ENCODE measurements at regions of chr9 and their contacts with region 1.

Region 1: DNA sequence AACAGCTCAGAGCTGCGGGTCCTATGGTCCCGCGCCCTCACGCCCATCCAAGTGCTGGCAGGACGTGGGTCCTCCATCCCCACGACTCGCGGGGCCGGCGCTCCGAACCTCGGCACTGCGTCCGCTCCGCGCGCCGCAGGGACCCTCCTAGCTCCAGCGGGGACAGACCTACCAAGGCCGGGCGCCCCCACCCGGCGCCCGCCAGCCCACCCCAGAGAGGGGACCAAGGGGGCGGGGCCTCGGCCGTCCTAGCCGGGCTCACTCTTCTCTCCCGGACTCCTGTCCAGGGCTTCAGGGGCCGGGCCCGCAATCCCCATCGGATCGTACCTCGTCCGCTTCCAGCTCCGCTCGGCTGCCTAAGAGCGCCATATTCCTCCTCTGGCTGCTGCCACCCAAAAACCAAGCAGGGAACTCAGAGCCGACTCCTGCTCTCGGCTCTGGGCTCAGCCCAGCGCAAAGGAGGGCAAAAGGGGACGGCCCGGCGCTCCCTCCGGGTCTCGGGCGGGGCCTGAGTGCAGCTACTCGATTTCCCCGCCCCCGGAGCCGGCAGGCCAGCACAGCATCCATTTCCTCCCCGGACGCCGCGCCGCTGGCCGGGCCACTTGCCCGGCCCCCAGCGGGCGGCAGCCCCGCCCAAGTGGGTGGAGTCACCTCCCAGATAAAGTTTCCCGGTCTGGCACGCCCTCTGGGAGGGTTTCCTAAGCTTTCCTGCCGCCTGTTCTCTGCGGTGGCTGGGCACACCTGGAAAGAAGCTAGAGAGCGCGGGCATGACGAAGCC is at the start of gene TTC39B:
- DNase-seq: peak; percentile 85
- H3K4me3 Mint-ChIP-seq: peak within 1 kb of the TSS; percentile 92
- H3K27ac Mint-ChIP-seq: peak within 1 kb of the TSS; percentile 86
- H3K4me1 Mint-ChIP-seq: peaks cover 59% of the 10 kb centered on the region
- H3K27me3 Mint-ChIP-seq: no peaks in the 10 kb centered on the region
- total RNA-seq, gene TTC39B: 27.5 to 29.6 TPM

Region 2: DNA sequence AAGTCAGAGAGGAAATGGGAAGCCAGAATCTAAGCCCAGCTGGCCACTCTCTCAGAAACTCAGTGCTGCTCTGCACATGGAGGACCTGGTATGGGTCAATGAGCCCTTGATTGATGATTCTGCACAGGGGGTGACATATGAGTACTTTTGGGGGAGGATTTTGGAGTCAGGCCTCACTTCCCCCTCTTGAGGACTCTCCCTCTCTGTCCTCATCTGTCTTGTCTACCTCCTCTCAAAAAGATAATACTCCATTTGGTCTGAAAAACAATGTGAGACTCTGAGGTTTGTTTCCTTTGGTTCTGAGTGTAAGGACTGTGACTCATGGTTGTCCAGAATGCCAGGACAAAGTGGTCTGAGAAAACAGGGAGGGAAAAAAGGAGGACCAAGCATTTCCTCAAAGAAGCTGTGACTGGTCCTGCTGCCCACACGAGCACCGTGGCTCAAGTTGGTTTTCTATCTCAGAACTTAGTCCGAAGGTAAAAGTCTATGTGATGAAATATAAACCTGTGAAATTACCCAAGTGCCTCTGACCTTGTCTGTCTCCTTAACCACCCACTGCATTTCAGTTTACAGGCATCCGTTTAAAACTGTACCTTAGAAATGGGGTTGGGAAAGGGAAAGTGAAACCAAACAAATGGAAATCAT is 11.1 kb before region 1 on chr9:
- CTCF ChIA-PET with region 1: interaction called, 21 read pairs
- POLR2A ChIA-PET with region 1: interaction called, 36 read pairs
- DNase-seq: no peak
- H3K4me3 Mint-ChIP-seq: peak overlapping the region; percentile 73
- H3K27ac Mint-ChIP-seq: peak overlapping the region; percentile 98
- H3K4me1 Mint-ChIP-seq: peaks cover 72% of the 10 kb centered on the region
- H3K27me3 Mint-ChIP-seq: no peaks in the 10 kb centered on the region

Region 3: DNA sequence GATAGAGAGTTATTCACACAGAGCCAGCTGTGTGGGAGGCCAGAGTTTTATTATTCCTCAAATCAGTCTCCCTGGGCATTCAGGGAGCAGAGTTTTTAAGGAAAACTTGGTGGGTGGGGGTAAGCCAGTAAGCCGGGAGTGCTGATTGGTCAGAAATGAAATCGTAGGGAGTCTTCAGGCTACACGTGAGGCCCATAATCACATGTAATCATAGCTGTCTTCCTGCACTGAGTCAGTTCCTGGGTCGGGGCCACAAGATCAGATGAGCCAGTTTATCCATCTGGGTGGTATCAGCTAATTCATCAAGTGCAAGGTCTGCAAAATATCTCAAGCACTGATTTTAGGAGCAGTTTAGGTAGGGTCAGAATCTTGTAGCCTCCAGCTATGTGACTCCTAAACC is 10.9 kb after region 1 on chr9:
- CTCF ChIA-PET with region 1: interaction called, 3 read pairs
- POLR2A ChIA-PET with region 1: interaction called, 15 read pairs
- DNase-seq: no peak
- H3K4me3 Mint-ChIP-seq: no peak overlapping the region
- H3K27ac Mint-ChIP-seq: no peak overlapping the region
- H3K4me1 Mint-ChIP-seq: peaks cover 10% of the 10 kb centered on the region
- H3K27me3 Mint-ChIP-seq: no peaks in the 10 kb centered on the region

Region 4: GRCh38 chr9:15404171-15404570 is 97.2 kb after region 1 on chr9:
- CTCF ChIA-PET with region 1: no interaction called
- POLR2A ChIA-PET with region 1: no interaction called
- DNase-seq: no peak
- H3K4me3 Mint-ChIP-seq: no peak overlapping the region
- H3K27ac Mint-ChIP-seq: no peak overlapping the region
- H3K4me1 Mint-ChIP-seq: no peaks in the 10 kb centered on the region
- H3K27me3 Mint-ChIP-seq: no peaks in the 10 kb centered on the region

Region 5: DNA sequence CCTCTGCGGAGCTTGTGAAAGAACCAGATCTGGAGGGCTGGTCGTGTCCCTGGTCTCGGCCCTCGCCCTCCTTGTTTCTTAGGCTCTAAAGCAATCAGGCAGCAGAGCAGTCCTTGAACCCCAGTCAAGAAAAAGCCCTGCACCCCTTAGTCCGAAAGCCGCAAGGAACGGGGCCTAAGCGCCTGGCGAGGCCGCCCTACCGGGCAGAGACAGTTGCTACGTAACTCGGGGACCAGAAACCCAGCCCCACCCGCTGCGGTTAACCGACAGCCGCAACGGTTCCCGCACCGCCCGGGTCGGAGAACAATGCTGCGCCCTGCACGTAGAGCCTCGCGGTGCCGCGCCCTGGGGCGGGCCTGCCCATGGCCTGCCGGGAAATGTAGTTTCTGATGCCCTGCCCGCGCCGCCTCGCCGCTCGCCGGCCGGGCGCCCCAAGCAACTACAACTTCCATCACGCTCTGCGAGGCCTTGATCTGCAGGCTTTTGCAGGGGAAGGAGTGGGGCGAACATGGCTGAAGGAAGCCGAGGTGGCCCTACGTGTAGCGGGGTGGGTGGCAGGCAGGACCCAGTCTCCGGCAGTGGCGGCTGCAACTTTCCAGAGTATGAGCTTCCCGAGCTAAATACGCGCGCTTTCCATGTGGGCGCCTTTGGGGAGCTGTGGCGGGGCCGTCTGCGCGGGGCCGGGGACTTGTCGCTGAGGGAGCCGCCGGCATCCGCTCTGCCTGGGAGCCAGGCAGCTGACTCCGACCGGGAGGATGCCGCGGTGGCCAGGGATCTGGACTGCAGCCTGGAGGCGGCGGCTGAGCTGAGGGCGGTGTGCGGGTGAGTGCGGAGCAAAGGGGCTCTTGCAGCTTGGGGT is 115.7 kb after region 1 on chr9 and contains the start of gene SNAPC3:
- CTCF ChIA-PET with region 1: interaction called, 12 read pairs
- POLR2A ChIA-PET with region 1: interaction called, 10 read pairs
- DNase-seq: peak; percentile 96
- H3K4me3 Mint-ChIP-seq: peak within 1 kb of the TSS; percentile 93
- H3K27ac Mint-ChIP-seq: peak within 1 kb of the TSS; percentile 83
- H3K4me1 Mint-ChIP-seq: peaks cover 40% of the 10 kb centered on the region
- H3K27me3 Mint-ChIP-seq: peaks cover 6% of the 10 kb centered on the region
- total RNA-seq, gene SNAPC3: 35.6 to 37.5 TPM

Measured in activated CD4-positive, alpha-beta memory T cell treated with anti-CD3 and anti-CD28 coated beads, Interleukin-2, amount 10 ng/mL, durations not matched to agents 7 days and 5 days (primary cell).